Ovary (tissue), 10 donors: ENCODE measurements at regions of chr9 and their contacts with region 1.

Region 1: GRCh38 chr9:6845880-6846279 is 88.1 kb downstream of the KDM4C start:
- DNase-seq: no peak
- H3K4me3 ChIP-seq: no peak overlapping the region
- H3K27ac ChIP-seq: no peak overlapping the region
- H3K4me1 ChIP-seq: no peaks in the 10 kb centered on the region
- H3K27me3 ChIP-seq: no peaks in the 10 kb centered on the region
- CTCF ChIP-seq: no peak
- EP300 ChIP-seq: no peak
- POLR2A ChIP-seq: no peak

Region 2: GRCh38 chr9:7246917-7247522 is 401.1 kb after region 1 on chr9:
- intact Hi-C with region 1: no loop called
- DNase-seq: no peak
- H3K4me3 ChIP-seq: no peak overlapping the region
- H3K27ac ChIP-seq: no peak overlapping the region
- H3K4me1 ChIP-seq: no peaks in the 10 kb centered on the region
- H3K27me3 ChIP-seq: no peaks in the 10 kb centered on the region
- CTCF ChIP-seq: no peak
- EP300 ChIP-seq: no peak
- POLR2A ChIP-seq: no peak

Region 3: DNA sequence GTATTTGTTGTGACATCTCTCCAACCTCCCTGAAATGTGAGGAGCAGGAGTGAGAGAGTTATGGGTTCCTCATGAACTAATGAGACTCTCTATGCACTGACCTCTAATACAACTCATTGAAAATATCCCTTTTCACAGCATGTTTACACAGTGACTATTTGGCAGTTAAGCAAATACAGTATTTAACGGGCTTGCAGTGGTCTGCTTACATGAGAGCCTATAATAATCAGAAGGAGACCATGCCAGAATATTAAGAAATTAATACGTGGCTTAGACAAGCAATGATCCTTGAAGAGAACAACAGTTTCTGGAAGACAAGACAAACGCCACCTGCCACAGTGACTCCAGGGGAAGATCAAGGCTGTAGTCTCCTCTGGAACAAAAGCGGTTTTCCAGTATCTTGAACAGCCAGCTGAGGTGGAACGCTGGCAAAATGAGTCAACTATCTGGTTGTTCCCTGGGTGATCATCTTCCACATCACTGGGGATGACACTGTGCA is 529.2 kb after region 1 on chr9:
- intact Hi-C with region 1: loop called in 1 of 4 experiments (anchors 2 kb)
- DNase-seq: no peak
- H3K4me3 ChIP-seq: no peak overlapping the region
- H3K27ac ChIP-seq: no peak overlapping the region
- H3K4me1 ChIP-seq: no peaks in the 10 kb centered on the region
- H3K27me3 ChIP-seq: no peaks in the 10 kb centered on the region
- CTCF ChIP-seq: no peak
- EP300 ChIP-seq: no peak
- POLR2A ChIP-seq: no peak